Heart left ventricle (tissue), 16 donors: ENCODE measurements at regions of chr4 and their contacts with region 1.

Region 1: DNA sequence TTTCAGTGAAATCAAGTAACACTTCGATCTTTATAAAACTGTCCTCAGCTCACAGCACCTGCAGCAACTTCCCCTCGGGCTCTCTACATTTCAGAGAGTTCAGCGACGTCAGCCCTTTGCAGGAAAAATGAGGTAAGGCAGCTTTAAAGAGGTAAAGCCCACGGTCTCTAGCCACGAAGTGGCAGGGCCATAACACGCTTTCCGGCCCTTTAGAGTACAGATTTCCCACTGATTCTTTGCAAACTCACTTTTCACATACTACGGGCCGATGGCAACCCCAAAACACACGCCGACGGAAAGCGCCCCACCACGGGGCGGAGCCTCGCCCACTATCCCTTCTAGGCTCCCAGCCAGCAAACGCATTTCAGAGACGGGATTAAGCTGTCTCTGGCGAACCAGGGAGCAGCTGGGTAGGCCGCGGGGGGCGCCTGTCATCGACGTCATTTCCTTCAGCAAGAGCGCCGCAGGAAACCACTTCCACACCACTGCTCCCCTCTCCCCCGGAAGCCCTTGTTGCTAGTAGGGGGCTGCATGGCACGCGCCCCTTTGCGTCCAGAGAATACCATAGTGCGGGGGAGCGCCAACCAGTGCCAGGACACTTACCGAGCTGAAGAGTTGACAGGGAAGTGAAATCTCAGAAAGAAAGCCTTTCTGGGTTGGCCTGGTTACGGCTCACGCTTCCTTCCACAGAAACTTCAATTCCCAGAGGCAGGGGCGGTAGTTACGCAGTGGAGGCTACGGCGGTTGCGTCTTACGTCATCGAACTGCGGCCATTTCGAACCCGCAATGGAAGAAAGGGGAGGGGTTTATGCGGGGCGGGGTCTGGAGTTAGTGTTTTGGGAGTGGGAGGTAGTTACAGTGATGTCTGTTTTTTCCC is at the start of gene TRMT10A:
- DNase-seq: peak; percentile 98 to 99 (median 99)
- ATAC-seq: peak; percentile 99
- H3K4me3 ChIP-seq: peak within 1 kb of the TSS; percentile 38 to 74 (median 62)
- H3K27ac ChIP-seq: peak within 1 kb of the TSS; percentile 87 to 98 (median 94)
- H3K4me1 ChIP-seq: peaks cover 0 to 13% (median 8%) of the 10 kb centered on the region in 12 donors
- H3K27me3 ChIP-seq: peaks cover 0 to 10% (median 0%) of the 10 kb centered on the region in 9 donors
- CTCF ChIP-seq: peak in 6 of 12 donors; percentile 6 to 27 (median 16)
- POLR2A ChIP-seq: peak in 1 of 2 donors; percentile 46
- total RNA-seq, gene TRMT10A: 1.8 to 5.1 (median 4.1) TPM

Region 2: DNA sequence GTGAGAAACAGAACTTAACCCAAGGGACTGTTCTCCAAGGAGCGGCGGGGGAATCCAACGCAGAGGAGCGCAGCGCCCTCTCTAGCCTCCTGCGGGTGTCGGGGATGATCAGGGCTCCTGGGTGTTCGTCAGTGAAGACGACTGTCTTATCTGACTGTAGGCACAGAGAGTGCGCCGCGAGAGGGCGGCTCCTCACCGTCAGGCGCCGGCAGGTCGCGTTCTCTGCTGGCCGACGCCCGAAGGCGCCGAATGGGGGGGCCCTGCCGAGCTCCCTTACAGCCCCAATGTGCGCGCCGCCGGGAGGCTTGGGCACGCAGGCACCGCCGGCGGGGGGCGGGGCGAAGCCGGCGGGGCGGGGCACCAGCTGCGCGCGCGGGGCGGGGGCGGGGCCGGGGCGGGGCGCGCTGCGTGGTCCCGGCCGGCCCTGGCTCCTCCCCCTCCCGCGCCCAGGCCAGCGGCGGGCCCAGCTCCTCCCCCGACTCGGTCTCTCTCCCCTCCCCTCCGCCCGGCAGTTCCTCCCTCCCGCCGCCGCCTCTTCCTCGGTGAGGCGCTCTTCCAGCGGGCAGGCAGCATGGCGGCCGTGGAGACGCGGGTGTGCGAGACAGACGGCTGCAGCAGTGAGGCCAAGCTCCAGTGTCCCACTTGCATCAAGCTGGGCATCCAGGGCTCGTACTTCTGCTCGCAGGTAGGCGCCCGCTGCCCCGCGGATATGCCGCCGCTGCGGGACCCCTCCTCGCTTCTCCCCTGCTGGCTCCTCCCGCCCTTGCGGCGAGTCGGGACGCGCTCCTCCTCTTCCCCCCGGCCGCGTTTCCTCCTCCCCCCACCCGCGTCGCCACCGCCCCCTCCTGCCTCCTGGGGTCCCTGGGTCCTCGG is 568.1 kb before region 1 on chr4 and contains the start of gene METAP1:
- intact Hi-C with region 1: loop called in 3 of 10 experiments (anchors 10 kb)
- DNase-seq: peak; percentile 94 to 97 (median 96)
- ATAC-seq: peak; percentile 92 to 97 (median 96)
- H3K4me3 ChIP-seq: peak within 1 kb of the TSS; percentile 89 to 99 (median 96)
- H3K27ac ChIP-seq: peak within 1 kb of the TSS; percentile 88 to 96 (median 92)
- H3K4me1 ChIP-seq: peaks cover 0 to 26% (median 15%) of the 10 kb centered on the region in 12 donors
- H3K27me3 ChIP-seq: no peaks in the 10 kb centered on the region
- CTCF ChIP-seq: peak; percentile 32 to 80 (median 56)
- POLR2A ChIP-seq: peak; percentile 26 to 69
- total RNA-seq, gene METAP1: 51.8 to 71.4 (median 63.6) TPM

Region 3: GRCh38 chr4:99642725-99643489 is 79.4 kb after region 1 on chr4:
- intact Hi-C with region 1: loop called in 2 of 10 experiments (anchors 5 to 10 kb)
- DNase-seq: peak; percentile 74 to 89 (median 76)
- ATAC-seq: peak; percentile 96 to 99 (median 98)
- H3K4me3 ChIP-seq: no peak overlapping the region
- H3K27ac ChIP-seq: peak overlapping the region; percentile 4 to 69 (median 46)
- H3K4me1 ChIP-seq: peaks cover 0 to 23% (median 3%) of the 10 kb centered on the region in 12 donors
- H3K27me3 ChIP-seq: no peaks in the 10 kb centered on the region
- CTCF ChIP-seq: no peak
- POLR2A ChIP-seq: no peak

Region 4: DNA sequence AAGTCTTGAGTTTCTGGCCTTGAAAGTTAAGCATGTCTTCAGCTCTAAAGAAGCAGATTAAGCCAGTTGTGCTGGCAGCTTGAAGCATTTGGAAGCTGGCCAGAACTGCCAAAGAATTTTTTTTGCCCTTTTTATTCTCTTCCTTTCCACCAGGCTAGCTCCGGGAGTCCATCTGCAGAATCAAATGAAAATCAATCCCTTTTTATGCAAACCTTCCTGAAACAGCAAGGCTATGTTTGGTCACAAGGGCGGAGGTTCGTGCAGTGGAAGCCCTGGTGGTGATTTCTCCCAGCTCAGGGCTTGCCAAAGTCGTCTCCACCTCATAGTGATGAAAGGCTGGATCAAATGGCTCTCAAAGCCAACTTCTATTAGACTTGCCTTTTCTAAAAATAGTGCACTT is 115.7 kb after region 1 on chr4:
- intact Hi-C with region 1: loop called in 1 of 10 experiments (anchors 10 kb)
- DNase-seq: peak in 4 of 5 donors; percentile 50 to 77 (median 60)
- ATAC-seq: peak; percentile 85 to 98 (median 96)
- H3K4me3 ChIP-seq: no peak overlapping the region
- H3K27ac ChIP-seq: peak overlapping the region in 8 of 12 donors; percentile 4 to 70 (median 54)
- H3K4me1 ChIP-seq: peaks cover 0 to 14% (median 4%) of the 10 kb centered on the region in 12 donors
- H3K27me3 ChIP-seq: no peaks in the 10 kb centered on the region
- CTCF ChIP-seq: peak in 4 of 12 donors; percentile 5 to 28 (median 8)
- POLR2A ChIP-seq: no peak

Region 5: DNA sequence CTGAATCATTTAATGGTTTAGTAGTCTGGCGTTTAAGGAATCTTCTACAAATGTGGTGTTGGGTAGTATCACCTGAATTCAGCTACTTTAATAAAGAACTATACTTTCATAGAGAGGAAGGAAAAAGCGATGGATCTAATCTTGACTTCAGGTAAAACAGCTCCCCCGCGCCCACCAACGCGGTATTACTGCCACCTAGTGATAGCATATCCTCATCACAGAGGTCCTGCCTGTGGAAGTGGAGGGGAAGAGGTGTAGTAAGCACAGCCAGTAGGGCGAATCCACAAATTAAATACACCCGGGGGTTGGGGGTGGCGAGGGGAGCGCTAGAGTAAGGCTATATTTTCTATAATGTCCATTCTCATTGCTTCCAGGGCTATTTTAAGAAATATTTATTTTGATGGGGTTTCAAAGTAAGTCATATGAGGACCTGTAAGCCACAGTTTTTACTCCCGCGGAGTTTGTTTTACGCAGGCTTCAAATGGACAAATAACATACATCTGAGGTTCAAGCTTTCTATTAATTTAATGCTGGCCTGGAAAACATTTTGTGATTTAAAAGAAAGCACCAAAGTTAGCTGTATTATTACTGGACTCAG is 244.8 kb after region 1 on chr4:
- intact Hi-C with region 1: loop called (anchors 1 to 5 kb)
- DNase-seq: peak in 4 of 5 donors; percentile 38 to 66 (median 54)
- ATAC-seq: peak; percentile 57 to 84 (median 73)
- H3K4me3 ChIP-seq: no peak overlapping the region
- H3K27ac ChIP-seq: peak overlapping the region in 1 of 12 donors; percentile 14
- H3K4me1 ChIP-seq: peaks cover 0 to 12% (median 0%) of the 10 kb centered on the region in 12 donors
- H3K27me3 ChIP-seq: no peaks in the 10 kb centered on the region
- CTCF ChIP-seq: peak; percentile 38 to 71 (median 62)
- POLR2A ChIP-seq: no peak

Region 6: GRCh38 chr4:99894161-99894997 is 330.8 kb after region 1 on chr4 and contains the start of gene LAMTOR3:
- intact Hi-C with region 1: loop called in 9 of 10 experiments (anchors 2 to 10 kb)
- DNase-seq: peak; percentile 91 to 95 (median 93)
- ATAC-seq: peak; percentile 97 to 100 (median 99)
- H3K4me3 ChIP-seq: peak within 1 kb of the TSS; percentile 74 to 93 (median 86)
- H3K27ac ChIP-seq: peak within 1 kb of the TSS; percentile 48 to 87 (median 82)
- H3K4me1 ChIP-seq: peaks cover 0 to 47% (median 23%) of the 10 kb centered on the region in 12 donors
- H3K27me3 ChIP-seq: no peaks in the 10 kb centered on the region
- CTCF ChIP-seq: no peak
- POLR2A ChIP-seq: peak in 1 of 2 donors; percentile 36
- total RNA-seq, gene LAMTOR3: 26.6 to 40.0 (median 32.9) TPM